Colonic mucosa (tissue), 4 donors: ENCODE measurements at regions of chr1 and their contacts with region 1.

Region 1: DNA sequence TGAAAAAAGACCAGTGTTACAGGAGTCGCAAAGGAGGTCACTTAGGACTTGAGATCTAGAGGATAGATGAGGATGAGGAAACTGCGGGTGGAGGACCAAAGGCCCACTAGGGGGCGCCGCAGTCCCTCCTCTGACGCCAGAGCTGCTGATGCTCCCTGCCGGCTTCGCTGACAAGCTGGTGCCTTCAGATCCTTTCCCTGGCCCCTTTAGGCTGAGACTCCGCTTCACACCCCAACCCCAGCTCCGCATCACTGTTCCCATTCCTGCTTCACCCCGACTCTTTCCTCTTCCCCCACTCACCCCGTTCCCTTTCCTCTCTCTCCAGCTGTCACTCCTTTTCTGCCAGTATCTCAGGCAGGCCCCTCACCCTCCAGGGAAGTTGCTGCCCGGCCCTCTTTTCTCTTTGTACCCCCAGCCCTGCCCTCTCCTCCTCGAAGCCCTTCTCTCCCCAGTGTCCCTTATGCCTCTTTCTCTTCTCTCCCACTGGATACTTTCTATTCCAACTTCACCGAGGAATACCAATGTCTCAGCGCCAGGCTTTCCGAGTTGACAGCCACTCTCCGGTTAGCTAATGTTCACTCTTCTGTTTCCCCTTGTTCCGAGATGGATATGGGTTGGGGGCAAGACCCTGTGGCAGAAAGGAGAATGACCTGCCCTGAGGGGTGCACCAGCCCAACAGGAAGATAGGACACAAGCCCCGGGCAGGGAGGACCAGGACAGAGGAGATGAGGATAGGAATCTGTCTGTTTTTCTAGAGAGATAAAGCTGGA is 4.5 kb downstream of the KCNJ9 start:
- DNase-seq: peak; percentile 84
- H3K4me3 ChIP-seq: no peak overlapping the region
- H3K27ac ChIP-seq: no peak overlapping the region
- H3K4me1 ChIP-seq: no peaks in the 10 kb centered on the region
- H3K27me3 ChIP-seq: peaks cover 7% of the 10 kb centered on the region
- CTCF ChIP-seq: peak; percentile 84

Region 2: DNA sequence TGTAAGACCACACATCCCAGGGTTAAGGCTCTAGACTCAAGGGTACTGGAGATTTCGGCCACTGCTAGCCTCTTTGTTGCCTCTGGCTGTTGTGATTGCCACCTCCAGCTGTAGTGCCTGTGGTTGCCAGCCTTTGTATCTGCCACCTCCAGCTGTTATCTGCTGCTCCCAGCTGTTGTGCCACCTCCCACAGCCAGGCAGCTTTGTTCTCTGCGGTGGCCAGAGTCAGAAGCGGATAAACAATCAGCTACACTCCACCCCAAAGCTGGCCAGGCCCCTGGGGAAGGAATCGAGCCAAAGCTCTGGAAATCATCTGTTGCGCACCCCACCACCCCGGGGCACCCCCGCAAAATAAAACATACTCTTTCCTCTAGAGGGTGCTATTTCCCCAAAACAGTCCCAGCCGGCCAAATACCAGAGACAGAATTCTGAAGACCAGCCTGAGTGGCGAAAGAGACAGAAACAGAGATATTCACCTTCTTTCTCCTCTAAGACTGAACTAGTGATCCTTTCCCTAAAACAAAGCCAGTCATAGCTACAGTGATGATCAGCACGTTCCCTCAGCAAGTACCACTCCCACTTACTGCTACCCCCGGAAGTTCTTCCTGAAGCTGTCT is 39.3 kb before region 1 on chr1:
- intact Hi-C with region 1: loop called (anchors 5 kb)
- DNase-seq: peak; percentile 32
- H3K4me3 ChIP-seq: no peak overlapping the region
- H3K27ac ChIP-seq: no peak overlapping the region
- H3K4me1 ChIP-seq: no peaks in the 10 kb centered on the region
- H3K27me3 ChIP-seq: no peaks in the 10 kb centered on the region
- CTCF ChIP-seq: peak; percentile 61

Region 3: GRCh38 chr1:160376525-160377131 is 290.8 kb after region 1 on chr1:
- intact Hi-C with region 1: loop called (anchors 10 kb)
- DNase-seq: peak; percentile 37
- H3K4me3 ChIP-seq: no peak overlapping the region
- H3K27ac ChIP-seq: no peak overlapping the region
- H3K4me1 ChIP-seq: peaks cover 9% of the 10 kb centered on the region
- H3K27me3 ChIP-seq: no peaks in the 10 kb centered on the region
- CTCF ChIP-seq: peak; percentile 89